ENCODE measurements at regions of chr5 and their contacts with region 1.

Region 1: GRCh38 chr5:52738095-52738506 is 49.6 kb upstream of the ITGA1 start:
- DNase-seq: no peak
- ATAC-seq: no peak
- H3K4me3 Mint-ChIP-seq: no peak overlapping the region
- H3K27ac Mint-ChIP-seq: peak overlapping the region; percentile 51
- H3K4me1 Mint-ChIP-seq: peaks cover 50% of the 10 kb centered on the region
- H3K27me3 Mint-ChIP-seq: no peaks in the 10 kb centered on the region

Region 2: DNA sequence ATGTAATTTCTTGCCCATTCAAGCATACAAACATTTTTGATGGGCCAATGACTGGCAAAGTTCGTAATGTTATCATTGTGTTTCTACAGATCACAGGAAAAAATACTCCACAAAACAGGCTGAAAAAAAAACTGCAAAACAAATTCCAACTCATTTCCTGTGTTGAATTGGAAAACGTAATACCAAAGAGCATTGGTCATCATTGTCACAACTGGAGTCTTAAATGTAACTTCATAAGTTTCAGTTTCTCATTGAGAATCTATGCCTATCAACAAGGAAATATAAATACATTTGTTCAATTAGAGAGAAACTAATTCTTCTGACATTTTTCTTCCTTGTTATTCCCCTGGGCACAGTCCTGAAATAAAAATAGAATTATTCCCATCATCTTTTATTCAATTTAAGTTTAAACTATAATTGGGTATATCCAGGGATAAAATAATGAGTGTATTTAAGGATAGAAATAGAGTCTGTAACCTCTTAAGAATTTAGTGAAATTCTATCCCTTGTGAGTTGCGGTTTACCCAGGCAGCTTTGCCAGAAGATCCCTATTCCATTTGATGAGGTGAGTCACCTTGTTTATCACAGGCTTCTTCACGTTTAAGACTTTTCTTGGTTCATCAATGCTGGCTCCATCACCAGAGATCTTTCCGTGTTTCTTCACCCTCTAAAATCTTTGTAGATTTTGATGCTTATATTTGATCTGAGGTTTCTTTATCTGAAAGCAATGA is 63.1 kb before region 1 on chr5:
- CTCF ChIA-PET with region 1: no interaction called
- POLR2A ChIA-PET with region 1: no interaction called
- DNase-seq: no peak
- ATAC-seq: no peak
- H3K4me3 Mint-ChIP-seq: no peak overlapping the region
- H3K27ac Mint-ChIP-seq: no peak overlapping the region
- H3K4me1 Mint-ChIP-seq: peaks cover 19% of the 10 kb centered on the region
- H3K27me3 Mint-ChIP-seq: peaks cover 6% of the 10 kb centered on the region

Region 3: DNA sequence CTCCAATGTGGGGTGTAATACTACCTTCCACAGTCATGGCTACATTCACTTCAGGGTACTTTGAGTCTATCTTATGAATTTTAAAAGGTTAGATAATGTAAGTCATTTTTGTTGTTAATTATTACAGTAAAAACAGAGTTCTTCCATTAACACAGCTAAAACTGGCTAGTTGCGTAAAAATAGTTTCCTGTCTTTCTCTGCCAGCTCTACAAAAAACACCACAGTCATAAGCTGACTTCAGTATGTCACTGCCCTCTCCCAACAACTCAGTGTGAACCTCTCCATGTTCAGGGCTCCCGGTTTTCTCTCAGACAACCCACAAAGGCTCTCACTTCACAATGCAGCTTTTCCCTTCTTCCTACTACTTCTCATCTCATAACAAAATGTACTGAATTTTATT is 35.2 kb before region 1 on chr5:
- CTCF ChIA-PET with region 1: no interaction called
- POLR2A ChIA-PET with region 1: no interaction called
- DNase-seq: no peak
- ATAC-seq: no peak
- H3K4me3 Mint-ChIP-seq: no peak overlapping the region
- H3K27ac Mint-ChIP-seq: peak overlapping the region; percentile 14
- H3K4me1 Mint-ChIP-seq: peaks cover 47% of the 10 kb centered on the region
- H3K27me3 Mint-ChIP-seq: no peaks in the 10 kb centered on the region

Region 4: GRCh38 chr5:52725065-52725746 is 12.9 kb before region 1 on chr5:
- CTCF ChIA-PET with region 1: interaction called, 12 read pairs
- POLR2A ChIA-PET with region 1: interaction called, 4 read pairs
- DNase-seq: peak; percentile 90
- ATAC-seq: peak; percentile 96
- H3K4me3 Mint-ChIP-seq: peak overlapping the region; percentile 58
- H3K27ac Mint-ChIP-seq: peak overlapping the region; percentile 92
- H3K4me1 Mint-ChIP-seq: peaks cover 67% of the 10 kb centered on the region
- H3K27me3 Mint-ChIP-seq: no peaks in the 10 kb centered on the region

Region 5: GRCh38 chr5:52805615-52806014 is 67.5 kb after region 1 on chr5:
- CTCF ChIA-PET with region 1: no interaction called
- POLR2A ChIA-PET with region 1: no interaction called
- DNase-seq: no peak
- ATAC-seq: no peak
- H3K4me3 Mint-ChIP-seq: no peak overlapping the region
- H3K27ac Mint-ChIP-seq: no peak overlapping the region
- H3K4me1 Mint-ChIP-seq: peaks cover 46% of the 10 kb centered on the region
- H3K27me3 Mint-ChIP-seq: no peaks in the 10 kb centered on the region

Measured in activated CD8-positive, alpha-beta T cell treated with anti-CD3 and anti-CD28 coated beads, Interleukin-2, amount 10 ng/mL, durations not matched to agents 7 days and 5 days (primary cell).